Right lobe of liver (tissue), 6 donors: ENCODE measurements at regions of chr17 and their contacts with region 1.

Region 1: DNA sequence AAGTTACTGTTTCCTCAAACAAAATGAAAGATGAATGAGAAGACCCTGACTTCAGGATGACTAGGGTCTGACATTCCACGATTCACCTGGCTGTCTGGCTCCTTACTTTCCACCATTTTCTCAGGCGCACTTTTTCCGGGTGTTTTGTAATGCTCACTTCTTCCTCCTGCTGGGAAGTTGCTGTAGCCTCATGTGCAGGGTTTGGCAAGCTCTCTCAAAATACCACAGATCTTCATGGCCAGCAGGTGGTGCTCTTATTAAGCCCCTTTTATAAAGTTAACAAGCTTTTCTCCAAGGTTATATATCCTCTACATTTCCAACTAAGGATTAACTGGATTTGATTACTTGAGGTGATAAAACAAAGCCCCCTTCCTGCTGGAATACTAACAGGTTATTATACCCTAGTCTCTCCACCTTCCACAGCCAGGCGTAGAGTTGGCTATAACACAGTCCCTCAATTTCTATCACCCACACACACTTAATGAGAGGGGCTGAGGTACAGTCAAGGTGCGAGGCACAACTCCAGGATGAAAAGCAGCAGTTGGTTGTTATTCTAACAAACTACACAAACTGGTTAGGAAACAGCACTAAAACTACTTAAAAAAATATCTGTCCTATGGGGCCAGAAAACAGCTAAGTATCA is 45.4 kb downstream of the STH start:
- DNase-seq: peak in 2 of 3 donors; percentile 45 to 75
- ATAC-seq: peak; percentile 81 to 94 (median 89)
- H3K4me3 ChIP-seq: no peak overlapping the region
- H3K27ac ChIP-seq: no peak overlapping the region
- H3K4me1 ChIP-seq: peaks cover 0 to 31% (median 10%) of the 10 kb centered on the region in 4 donors
- H3K27me3 ChIP-seq: no peaks in the 10 kb centered on the region
- CTCF ChIP-seq: peak; percentile 84 to 94 (median 90)
- POLR2A ChIP-seq: no peak

Region 2: DNA sequence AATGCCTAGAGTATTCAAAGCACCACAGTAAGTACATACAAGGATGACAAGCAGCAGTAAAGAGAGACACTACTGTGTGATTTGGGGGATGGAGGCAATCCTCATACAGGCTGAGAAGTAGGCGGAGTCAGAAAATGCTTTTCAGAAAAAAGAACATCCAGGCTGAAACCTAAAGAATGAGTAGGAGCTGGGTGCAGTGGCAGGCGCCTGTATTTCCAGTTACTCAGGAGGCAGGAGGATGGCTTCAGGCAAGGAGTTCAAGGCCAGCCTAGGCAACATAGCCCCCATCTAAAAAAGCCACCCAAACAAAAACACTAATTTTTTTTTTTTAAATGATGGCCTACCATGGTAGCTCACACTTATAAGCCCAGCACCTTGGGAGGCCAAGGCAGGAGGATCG is 138.6 kb after region 1 on chr17:
- intact Hi-C with region 1: loop called in 1 of 2 experiments (anchors 10 kb)
- DNase-seq: no peak
- ATAC-seq: no peak
- H3K4me3 ChIP-seq: no peak overlapping the region
- H3K27ac ChIP-seq: no peak overlapping the region
- H3K4me1 ChIP-seq: peaks cover 0 to 52% (median 9%) of the 10 kb centered on the region in 4 donors
- H3K27me3 ChIP-seq: no peaks in the 10 kb centered on the region
- CTCF ChIP-seq: no peak
- POLR2A ChIP-seq: no peak

Region 3: DNA sequence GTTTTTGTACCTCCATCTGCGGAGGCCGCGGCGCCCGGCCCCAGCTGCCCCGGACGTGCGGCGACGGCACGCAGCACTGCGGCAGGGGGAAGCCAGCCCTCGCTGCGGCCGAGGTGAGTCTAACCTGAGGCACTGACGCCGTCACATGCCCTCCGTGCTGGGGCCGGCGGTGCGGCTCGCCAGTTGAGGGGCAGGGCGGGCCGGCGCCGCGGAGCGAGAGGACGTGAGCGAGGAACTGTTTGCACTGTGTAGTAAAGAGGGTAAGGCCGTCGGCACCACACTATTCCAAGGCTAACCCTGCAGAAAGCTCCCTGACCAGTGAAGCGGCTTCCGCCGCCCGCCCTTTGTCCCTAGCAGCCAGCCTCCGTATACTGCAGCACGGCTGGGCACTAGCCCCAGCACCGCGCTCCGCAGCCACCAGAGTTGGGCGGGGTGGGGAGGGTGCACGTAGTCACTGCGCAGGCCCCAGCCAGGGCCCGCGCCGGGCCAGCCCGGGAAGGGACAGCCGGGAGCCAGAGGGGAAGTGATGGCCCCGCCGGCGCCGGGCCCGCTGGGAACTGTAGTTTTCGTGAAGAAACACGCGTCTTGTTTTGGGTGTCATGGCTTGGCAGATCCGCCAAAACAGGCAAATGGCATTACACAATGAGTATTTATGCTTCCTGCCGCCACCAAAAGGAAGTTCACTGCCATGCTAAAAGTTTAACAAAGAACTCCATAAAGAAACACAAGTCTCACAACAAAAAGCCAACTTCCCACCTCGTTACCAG is 149.4 kb after region 1 on chr17:
- intact Hi-C with region 1: loop called (anchors 5 to 10 kb)
- DNase-seq: peak; percentile 98 to 100 (median 98)
- ATAC-seq: peak; percentile 89 to 97 (median 91)
- H3K4me3 ChIP-seq: peak overlapping the region; percentile 81 to 90 (median 83)
- H3K27ac ChIP-seq: peak overlapping the region; percentile 95 to 99 (median 99)
- H3K4me1 ChIP-seq: peaks cover 0 to 39% (median 0%) of the 10 kb centered on the region in 4 donors
- H3K27me3 ChIP-seq: no peaks in the 10 kb centered on the region
- CTCF ChIP-seq: peak in 2 of 4 donors; percentile 4 to 12
- POLR2A ChIP-seq: peak; percentile 79

Region 4: DNA sequence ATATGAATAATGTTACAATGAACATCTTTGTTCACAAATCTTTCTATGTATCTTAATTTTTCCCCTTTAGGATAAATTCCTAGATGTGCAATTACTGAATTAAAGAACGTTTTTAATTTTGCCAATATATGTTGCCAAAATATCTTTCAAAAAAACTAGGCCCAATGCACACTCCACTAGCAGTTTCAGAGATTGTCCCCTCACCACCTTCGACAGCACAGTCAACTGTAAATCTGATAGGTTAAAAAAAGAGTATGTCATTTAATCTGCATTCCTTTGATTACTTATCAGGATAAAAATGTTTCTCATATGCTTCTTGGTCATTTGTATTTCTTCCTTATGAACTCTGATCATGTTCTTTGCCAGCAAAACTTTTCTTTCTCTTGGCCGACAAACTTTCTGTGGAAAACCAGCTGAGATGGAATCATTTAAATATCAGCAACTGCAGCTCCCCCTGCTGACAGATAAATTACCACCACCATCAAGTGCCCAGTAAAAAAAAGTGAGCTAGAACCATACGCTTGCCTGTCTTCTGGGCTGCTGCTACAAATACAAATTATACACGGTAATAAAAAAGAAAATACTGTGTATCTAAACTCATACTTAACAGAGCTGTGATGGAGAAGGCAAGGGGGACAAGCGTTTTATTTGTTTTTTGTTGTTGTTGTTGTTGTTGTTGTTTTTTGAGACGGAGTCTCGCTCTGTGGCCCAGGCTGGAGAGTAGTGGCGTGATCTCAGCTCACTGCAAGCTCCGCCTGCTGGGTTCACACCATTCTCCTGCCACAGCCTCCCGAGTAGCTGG is 168.4 kb after region 1 on chr17:
- intact Hi-C with region 1: loop called in 1 of 2 experiments (anchors 10 kb)
- DNase-seq: peak in 1 of 3 donors; percentile 53
- ATAC-seq: peak; percentile 86 to 97 (median 92)
- H3K4me3 ChIP-seq: no peak overlapping the region
- H3K27ac ChIP-seq: no peak overlapping the region
- H3K4me1 ChIP-seq: peaks cover 0 to 4% (median 0%) of the 10 kb centered on the region in 4 donors
- H3K27me3 ChIP-seq: no peaks in the 10 kb centered on the region
- CTCF ChIP-seq: peak; percentile 65 to 93 (median 84)
- POLR2A ChIP-seq: no peak